GM23248 (cell line): ENCODE measurements at regions of chr12 and their contacts with region 1.

Region 1: GRCh38 chr12:52865090-52865944 is 16.5 kb upstream of the KRT78 start:
- DNase-seq: peak; percentile 80
- H3K4me3 ChIP-seq: no peak overlapping the region
- H3K27ac ChIP-seq: no peak overlapping the region
- H3K4me1 ChIP-seq: peaks cover 2% of the 10 kb centered on the region; the same call in 1 of the 2 replicates
- H3K27me3 ChIP-seq: no peaks in the 10 kb centered on the region

Region 2: DNA sequence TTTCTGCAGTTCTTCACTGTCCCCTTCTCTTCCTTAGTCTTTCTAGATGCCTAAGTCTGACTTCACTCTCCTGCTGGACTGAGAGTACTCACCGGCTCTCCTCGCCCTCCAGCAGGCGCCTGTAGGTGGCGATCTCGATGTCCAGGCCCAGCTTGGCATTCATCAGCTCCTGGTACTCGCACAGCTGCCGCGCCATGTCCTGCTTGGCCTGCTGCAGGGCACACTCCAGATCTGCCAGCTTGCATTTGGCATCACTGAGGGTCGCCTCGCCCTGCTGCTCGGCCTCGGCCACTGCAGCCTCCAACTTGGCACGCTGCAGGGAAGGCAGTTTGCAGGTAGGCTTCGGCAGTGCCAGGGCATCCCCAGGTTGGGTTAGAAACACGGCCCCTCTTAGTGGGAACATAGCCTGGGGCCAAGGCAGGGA is 485.0 kb before region 1 on chr12:
- in situ Hi-C with region 1: loop called (anchors 10 kb)
- DNase-seq: peak; percentile 57
- H3K4me3 ChIP-seq: no peak overlapping the region
- H3K27ac ChIP-seq: no peak overlapping the region
- H3K4me1 ChIP-seq: no peaks in the 10 kb centered on the region
- H3K27me3 ChIP-seq: peaks cover 8% of the 10 kb centered on the region; the same call in 1 of the 2 replicates

Region 3: GRCh38 chr12:52582971-52583456 is 282.3 kb before region 1 on chr12:
- in situ Hi-C with region 1: loop called (anchors 5 kb)
- DNase-seq: peak; percentile 81
- H3K4me3 ChIP-seq: no peak overlapping the region
- H3K27ac ChIP-seq: no peak overlapping the region
- H3K4me1 ChIP-seq: no peaks in the 10 kb centered on the region
- H3K27me3 ChIP-seq: peaks cover 16% of the 10 kb centered on the region